ENCODE measurements at regions of chr17 and their contacts with region 1.

Region 1: DNA sequence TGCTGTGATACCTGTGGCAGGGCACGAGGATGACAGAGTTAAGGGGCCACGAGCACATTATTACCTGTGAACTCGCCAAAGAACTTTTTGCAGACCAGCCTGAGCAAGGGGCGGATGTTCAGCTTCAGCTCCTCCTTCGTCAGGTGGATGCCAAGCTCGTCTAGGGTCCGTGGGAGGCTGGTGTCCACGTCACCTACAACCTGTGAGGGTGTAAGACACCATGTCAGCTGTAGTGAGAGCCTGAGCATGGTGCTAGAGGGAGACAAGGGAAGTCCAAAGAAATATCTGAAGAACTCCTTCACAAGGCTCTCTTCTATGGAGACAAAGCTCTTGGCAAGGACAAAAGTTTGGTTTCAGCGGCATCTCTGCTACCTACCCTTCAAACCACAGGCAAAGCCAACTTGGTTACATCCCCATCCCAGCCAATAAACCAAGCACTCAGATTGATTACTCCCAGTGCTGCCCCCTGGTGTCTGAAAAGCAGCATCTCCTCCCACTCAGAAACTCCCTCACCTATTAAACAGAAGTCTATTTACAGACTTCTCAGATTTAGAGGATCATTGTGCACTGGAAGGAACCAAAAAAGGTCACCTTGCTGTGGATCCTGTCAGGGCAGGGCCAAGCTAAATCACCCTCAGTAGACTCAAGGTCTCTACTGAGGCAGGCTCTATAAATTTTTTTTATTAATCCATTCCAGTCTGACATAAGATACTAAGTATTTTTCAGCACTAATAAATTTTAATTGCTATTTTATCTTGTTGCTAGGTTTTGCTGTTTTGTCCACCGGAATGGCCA is 17.4 kb downstream of the HIGD1B start:
- DNase-seq: peak; percentile 80
- H3K4me3 Mint-ChIP-seq: no peak overlapping the region
- H3K27ac Mint-ChIP-seq: no peak overlapping the region
- H3K4me1 Mint-ChIP-seq: no peaks in the 10 kb centered on the region
- H3K27me3 Mint-ChIP-seq: no peaks in the 10 kb centered on the region

Region 2: GRCh38 chr17:44878627-44879221 is 13.7 kb after region 1 on chr17:
- CTCF ChIA-PET with region 1: interaction called, 13 read pairs
- DNase-seq: peak; percentile 54
- H3K4me3 Mint-ChIP-seq: no peak overlapping the region
- H3K27ac Mint-ChIP-seq: no peak overlapping the region
- H3K4me1 Mint-ChIP-seq: no peaks in the 10 kb centered on the region
- H3K27me3 Mint-ChIP-seq: no peaks in the 10 kb centered on the region

Region 3: GRCh38 chr17:44968226-44969143 is 103.4 kb after region 1 on chr17 and contains the start of gene C1QL1:
- CTCF ChIA-PET with region 1: no interaction called
- DNase-seq: peak; percentile 92
- H3K4me3 Mint-ChIP-seq: peak within 1 kb of the TSS; percentile 72
- H3K27ac Mint-ChIP-seq: no peak within 1 kb of the TSS
- H3K4me1 Mint-ChIP-seq: peaks cover 28% of the 10 kb centered on the region
- H3K27me3 Mint-ChIP-seq: peaks cover 96% of the 10 kb centered on the region

Region 4: GRCh38 chr17:45235416-45236281 is 370.6 kb after region 1 on chr17:
- CTCF ChIA-PET with region 1: no interaction called
- DNase-seq: peak; percentile 86
- H3K4me3 Mint-ChIP-seq: no peak overlapping the region
- H3K27ac Mint-ChIP-seq: peak overlapping the region; percentile 84
- H3K4me1 Mint-ChIP-seq: peaks cover 52% of the 10 kb centered on the region
- H3K27me3 Mint-ChIP-seq: no peaks in the 10 kb centered on the region